Mucosa of descending colon (tissue), 3 donors: ENCODE measurements at regions of chr19 and their contacts with region 1.

Region 1: GRCh38 chr19:47436712-47437401 is 17.5 kb upstream of the MEIS3 start:
- DNase-seq: peak; percentile 77 to 92 (median 86)
- ATAC-seq: peak; percentile 98
- H3K4me3 ChIP-seq: no peak overlapping the region
- H3K4me1 ChIP-seq: no peaks in the 10 kb centered on the region
- CTCF ChIP-seq: peak; percentile 65

Region 2: GRCh38 chr19:47351547-47351946 is 85.3 kb before region 1 on chr19:
- intact Hi-C with region 1: no loop called
- DNase-seq: no peak
- ATAC-seq: no peak
- H3K4me3 ChIP-seq: no peak overlapping the region
- H3K4me1 ChIP-seq: no peaks in the 10 kb centered on the region
- CTCF ChIP-seq: no peak

Region 3: DNA sequence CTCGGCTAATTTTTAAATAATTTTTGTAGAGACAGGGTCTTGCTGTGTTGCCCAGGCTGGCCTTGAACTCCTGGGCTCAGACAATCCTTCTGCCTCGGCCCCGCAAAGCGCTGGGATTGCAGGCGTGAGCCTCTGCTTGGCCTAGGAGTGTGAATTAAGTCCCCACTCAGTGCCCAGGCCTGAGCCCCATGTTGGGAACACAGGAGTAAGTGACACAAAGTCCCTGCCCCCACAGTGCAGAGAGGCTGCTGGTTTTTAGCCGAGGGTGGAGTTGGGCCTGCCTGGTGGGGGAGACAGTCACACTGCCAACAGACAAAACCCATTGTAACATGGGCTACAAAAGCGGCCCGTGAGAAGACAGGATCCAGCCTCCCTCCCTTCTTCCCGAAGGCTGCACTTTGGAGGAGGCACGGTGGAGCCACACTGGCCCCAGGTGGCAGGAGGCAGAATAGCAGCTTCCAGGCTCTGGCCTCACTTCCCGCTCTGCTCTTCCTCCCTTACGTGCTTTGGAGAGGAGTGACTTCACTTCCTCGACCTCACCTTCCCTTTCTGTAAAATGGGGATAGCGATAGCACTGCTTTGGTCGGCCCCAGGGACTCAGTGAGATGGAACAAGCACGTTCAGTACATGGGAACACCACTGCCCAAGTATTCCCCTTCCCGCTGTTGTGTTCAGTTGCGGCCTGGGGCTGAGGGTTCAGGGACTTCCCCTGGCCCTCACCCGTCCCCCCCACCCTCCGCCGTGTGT is 261.2 kb after region 1 on chr19:
- intact Hi-C with region 1: loop called in 1 of 2 experiments (anchors 5 kb)
- DNase-seq: peak; percentile 70 to 86 (median 78)
- ATAC-seq: peak; percentile 97
- H3K4me3 ChIP-seq: no peak overlapping the region
- H3K4me1 ChIP-seq: no peaks in the 10 kb centered on the region
- CTCF ChIP-seq: peak; percentile 91

Region 4: DNA sequence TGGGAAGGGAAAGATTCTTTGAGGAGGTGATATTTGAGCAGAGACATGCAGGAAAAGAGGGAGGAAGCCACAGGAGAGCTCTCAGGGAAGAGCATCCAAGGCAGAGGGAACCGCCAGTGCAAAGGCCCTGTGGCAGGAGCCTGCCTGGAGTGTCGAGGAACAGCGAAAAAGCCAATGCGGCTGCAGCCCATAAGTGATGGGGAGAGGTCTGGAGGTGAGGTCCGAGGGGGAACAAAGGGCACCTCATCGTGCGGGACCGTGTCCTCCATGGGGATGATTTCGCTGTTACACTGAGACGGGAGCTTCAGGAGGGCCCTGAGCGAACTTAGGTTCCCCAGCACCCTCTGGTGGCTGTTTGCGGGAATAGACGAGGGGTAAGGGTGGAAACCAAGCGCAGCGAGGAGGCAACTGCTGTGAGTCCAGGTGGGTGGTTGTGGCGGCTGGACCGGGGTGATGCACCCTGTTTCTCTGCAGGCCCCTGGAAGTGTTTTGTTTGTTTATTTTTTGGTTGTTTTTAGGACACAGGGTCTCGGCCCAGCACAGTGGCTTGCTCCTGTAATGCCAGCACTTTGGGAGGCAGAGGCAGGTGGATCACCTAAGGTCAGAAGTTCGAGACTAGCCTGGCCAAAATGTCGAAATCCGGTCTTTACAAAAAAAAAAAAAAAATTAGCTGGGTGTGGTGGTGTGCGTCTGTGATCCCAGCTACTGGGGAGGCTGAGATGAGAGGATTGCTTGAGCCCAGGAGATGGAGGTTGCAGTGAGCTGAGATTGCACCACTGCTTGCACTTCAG is 270.5 kb after region 1 on chr19:
- intact Hi-C with region 1: loop called in 1 of 2 experiments (anchors 5 kb)
- DNase-seq: peak; percentile 65 to 82 (median 81)
- ATAC-seq: peak; percentile 92
- H3K4me3 ChIP-seq: no peak overlapping the region
- H3K4me1 ChIP-seq: peaks cover 4% of the 10 kb centered on the region
- CTCF ChIP-seq: peak; percentile 86